Astrocyte of the cerebellum (primary cell): ENCODE measurements at regions of chr4 and their contacts with region 1.

Region 1: DNA sequence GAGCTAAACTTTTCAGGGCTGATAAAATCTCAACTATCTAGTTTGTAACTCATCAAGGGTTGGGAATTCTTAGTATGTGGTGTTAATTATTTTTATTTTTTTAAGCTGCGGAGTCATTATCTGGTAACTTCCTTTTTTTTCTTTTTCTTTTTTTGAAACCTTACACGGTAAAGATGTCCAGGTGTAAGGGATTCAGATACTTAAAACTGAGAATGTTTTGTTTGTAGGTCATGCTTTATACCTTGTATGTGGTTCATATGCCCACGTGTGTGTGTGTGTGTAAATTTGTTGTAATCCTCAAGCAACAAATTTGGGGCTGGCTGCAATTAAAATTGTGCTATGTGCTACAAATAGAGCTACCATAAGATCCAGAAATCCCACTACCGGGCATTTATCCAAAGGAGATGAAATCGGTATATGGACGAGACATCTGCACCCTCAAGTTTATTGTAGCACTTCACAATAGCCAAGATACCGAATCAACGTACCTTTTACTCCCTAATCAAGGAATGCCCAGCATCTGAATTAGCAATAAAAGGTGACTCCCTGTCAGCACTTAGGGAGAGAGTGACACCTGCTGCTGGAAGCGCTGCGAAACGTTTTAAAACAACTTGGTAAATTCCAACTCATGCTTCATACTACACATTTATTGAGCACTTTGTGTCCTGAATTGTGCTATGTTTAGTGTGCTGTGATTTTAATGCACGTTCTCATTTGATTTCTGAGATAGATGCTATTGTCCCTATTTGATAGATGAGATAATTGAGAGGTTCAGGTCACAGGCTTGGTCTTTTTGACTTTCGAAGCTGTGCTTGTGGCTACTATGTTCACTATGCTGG is 16.1 kb downstream of the MSMO1 start:
- DNase-seq: no peak
- H3K4me3 ChIP-seq: no peak overlapping the region
- CTCF ChIP-seq: peak; percentile 50

Region 2: DNA sequence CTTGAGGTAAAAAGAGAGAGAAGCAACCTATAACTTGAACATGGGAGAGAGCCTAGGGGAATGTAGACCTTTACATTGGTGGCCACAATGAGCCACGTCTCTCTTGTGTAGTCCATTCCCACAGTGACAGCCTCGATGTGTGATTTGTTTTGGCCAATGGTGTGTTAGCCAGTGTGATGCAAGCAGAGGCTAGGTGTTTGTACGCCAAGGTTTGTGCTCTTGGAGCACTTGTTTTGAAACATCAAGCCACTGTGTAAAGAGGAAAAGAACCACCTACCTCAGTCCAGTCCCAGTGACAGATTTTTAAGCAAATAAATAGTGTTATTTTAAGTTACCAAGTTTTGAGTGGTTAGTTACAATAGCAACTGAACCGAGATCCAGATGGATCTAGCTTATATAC is 207.0 kb before region 1 on chr4:
- in situ Hi-C with region 1: loop called (anchors 5 kb)
- DNase-seq: no peak
- H3K4me3 ChIP-seq: no peak overlapping the region
- CTCF ChIP-seq: no peak

Region 3: DNA sequence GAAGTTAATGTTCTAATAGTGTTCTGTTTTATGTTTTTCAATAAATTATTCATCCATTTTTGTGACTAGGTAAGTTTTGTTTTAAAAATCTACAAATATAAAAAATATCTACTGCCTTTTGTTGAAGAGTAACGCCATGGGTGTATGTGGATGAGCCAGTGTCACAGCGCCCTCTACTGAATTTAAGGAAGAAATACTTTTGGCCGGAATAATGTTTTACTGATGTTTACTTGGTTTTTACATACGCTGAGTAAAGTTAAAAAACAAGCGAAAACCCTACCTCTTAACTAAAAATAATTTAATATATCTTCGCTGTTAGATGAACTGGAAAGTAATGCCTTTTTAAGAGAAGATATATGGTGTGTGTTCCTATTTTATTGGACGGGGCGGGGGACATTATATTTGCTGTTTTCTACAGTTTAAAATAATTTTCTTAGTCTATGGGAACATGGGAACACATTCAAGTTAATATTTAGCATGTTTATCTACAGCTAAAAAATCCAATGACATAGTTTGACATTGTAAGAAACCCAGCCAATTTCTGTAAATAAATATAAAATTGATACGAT is 121.3 kb after region 1 on chr4:
- in situ Hi-C with region 1: loop called (anchors 10 kb)
- DNase-seq: peak; percentile 37
- H3K4me3 ChIP-seq: no peak overlapping the region
- CTCF ChIP-seq: peak; percentile 65